PC-3 (cell line): ENCODE measurements at regions of chr18 and their contacts with region 1.

Region 1: DNA sequence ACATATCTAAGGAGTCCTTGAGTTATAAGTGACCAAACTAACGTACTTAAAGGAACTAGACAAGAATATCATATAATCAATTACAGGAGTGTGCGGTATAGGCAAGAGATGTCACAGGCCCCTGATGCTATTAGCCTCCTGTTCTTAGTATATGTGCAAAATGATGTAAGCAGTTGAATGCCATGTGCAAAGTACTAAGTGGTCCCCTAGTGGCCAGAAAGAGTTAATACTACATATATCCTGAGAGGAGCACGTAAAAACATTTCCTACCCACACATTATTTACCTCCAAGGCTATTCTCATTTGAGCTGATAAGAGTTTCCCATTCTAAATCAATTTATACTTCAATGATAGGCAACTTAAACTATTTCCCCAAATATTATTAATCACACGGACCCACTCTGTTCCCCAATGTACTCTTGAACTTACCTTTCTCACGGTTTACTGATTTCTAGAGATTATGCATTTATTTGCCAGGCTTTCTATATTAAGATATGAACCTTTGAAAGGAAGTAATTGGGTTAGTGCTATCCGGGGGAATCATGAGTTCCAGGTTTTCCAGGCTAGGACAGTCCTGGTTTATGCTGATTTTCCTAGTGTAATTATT is 158.0 kb upstream of the KLHL14 start:
- DNase-seq: peak; percentile 36
- ATAC-seq: peak; percentile 70
- H3K4me3 ChIP-seq: no peak overlapping the region
- H3K27ac ChIP-seq: no peak overlapping the region
- H3K4me1 ChIP-seq: no peaks in the 10 kb centered on the region
- H3K27me3 ChIP-seq: no peaks in the 10 kb centered on the region
- CTCF ChIP-seq: peak; percentile 51

Region 2: GRCh38 chr18:32714571-32715148 is 216.1 kb before region 1 on chr18:
- CTCF ChIA-PET with region 1: no interaction called
- POLR2A ChIA-PET with region 1: no interaction called
- intact Hi-C with region 1: loop called (anchors 1 kb)
- DNase-seq: peak; percentile 56
- ATAC-seq: peak; percentile 48; the same call in 1 of the 2 replicates
- H3K4me3 ChIP-seq: no peak overlapping the region
- H3K27ac ChIP-seq: no peak overlapping the region
- H3K4me1 ChIP-seq: no peaks in the 10 kb centered on the region
- H3K27me3 ChIP-seq: 0 out of 2 replicates have a peak, but pooled peaks cover 4% of the 10 kb centered on the region
- CTCF ChIP-seq: peak; percentile 61

Region 3: DNA sequence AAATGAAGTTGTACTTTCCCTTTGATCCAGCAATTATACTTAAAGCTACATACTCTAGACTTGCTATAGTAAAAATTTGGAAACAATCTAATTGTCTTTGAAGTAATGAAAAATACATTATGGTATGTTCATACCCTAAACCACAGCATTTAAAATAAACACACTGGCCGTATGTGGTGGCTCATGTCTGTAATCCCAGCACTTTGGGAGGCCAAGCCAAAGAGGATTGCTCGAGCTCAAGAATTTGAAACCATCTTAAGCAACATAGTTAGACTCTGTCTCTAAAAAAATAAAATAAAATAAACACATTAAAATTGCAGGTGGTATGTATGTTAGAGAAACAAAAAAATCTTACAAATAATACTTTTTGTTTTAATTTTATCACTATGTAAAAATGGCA is 50.1 kb after region 1 on chr18:
- CTCF ChIA-PET with region 1: no interaction called
- POLR2A ChIA-PET with region 1: no interaction called
- intact Hi-C with region 1: no loop called
- DNase-seq: no peak
- ATAC-seq: no peak
- H3K4me3 ChIP-seq: no peak overlapping the region
- H3K27ac ChIP-seq: no peak overlapping the region
- H3K4me1 ChIP-seq: no peaks in the 10 kb centered on the region
- H3K27me3 ChIP-seq: no peaks in the 10 kb centered on the region
- CTCF ChIP-seq: no peak